IMR-90 (cell line): ENCODE measurements at regions of chr17 and their contacts with region 1.

Region 1: DNA sequence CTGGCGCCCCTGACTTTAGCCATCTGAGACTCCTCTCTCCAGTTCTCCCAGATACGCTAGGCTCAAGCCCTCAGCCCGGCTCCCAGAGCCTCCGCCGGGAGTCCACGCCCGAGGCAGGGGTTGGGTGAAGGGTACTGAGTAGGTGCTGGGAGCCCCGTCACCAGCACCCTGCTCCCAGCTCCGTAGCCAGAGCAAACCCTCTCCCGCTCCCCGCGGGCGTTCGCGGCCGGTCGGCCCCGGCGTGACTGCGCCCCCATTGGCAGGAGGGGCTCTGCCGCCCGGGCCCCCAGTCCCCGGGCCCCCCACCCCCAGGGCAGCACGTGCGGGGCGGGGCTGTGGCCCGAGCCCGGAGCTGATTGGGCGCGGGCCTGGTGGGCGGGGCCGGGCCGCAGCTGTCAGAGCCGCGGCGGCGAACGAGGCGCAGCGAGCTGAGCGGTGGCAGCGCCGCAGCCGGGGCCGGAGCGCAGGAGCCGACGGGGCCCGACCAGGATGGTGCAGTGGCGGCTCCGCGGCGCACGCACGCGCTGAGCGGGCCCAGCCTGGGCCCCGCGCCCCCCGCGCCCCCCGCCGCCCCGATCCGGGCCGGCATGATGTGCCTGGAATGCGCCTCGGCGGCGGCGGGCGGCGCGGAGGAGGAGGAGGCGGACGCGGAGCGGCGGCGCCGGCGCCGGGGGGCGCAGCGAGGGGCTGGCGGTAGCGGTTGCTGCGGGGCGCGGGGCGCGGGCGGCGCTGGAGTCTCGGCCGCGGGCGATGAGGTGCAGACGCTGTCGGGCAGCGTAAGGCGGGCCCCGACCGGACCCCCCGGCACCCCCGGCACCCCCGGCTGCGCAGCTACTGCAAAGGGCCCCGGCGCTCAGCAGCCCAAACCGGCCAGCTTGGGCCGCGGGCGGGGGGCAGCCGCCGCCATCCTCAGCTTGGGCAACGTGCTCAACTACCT is at the start of gene SPNS2:
- DNase-seq: peak; percentile 29
- ATAC-seq: peak; percentile 98
- H3K4me3 ChIP-seq: no peak within 1 kb of the TSS; the same call in 1 of the 2 replicates
- H3K27ac ChIP-seq: no peak within 1 kb of the TSS
- H3K4me1 ChIP-seq: no peaks in the 10 kb centered on the region
- H3K27me3 ChIP-seq: peaks cover 59% of the 10 kb centered on the region
- CTCF ChIP-seq: no peak
- POLR2A ChIP-seq: no peak
- RAD21 ChIP-seq: no peak
- total RNA-seq, gene SPNS2: under 0.01 TPM in 1 of 2 replicates, not detected in the other

Region 2: DNA sequence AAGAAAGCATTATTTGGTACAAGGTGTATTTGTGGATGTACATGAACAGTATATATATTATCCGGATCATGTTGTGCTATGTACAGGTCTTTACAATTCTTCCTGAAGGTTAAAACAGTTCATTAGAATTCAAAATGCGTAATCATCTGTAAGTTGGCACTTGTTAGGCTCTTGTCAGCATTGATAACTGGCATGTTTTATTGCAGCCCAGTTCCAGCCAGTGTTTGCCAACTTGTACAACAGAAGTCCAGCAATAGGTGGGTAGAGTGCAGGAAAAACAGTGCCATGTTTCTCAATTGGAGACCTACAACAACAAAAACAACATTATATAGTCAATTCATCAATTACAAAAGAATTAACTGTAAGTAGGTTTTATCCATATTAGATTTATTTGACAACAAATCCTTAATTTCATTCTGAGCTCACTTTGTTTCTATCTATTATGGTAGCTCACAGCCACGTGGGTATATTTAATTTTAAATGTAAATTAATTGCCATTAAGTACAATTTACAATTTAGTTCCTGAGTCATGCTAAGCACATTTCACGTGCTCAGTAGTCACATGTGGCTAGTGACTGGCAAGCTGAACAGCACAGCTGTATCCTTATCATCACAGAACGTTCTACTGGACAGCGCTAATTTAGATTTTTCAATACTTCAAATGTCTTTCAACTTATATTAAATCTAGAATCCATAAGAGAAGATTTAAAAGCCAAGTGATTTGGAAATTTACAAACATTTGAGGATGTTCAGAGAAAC is 226.3 kb before region 1 on chr17:
- CTCF ChIA-PET with region 1: no interaction called
- POLR2A ChIA-PET with region 1: interaction called, 18 read pairs
- dilution Hi-C with region 1: no loop called
- in situ Hi-C with region 1: no loop called
- intact Hi-C with region 1: no loop called
- DNase-seq: no peak
- ATAC-seq: no peak
- H3K4me3 ChIP-seq: no peak overlapping the region
- H3K27ac ChIP-seq: no peak overlapping the region
- H3K4me1 ChIP-seq: no peaks in the 10 kb centered on the region
- H3K27me3 ChIP-seq: no peaks in the 10 kb centered on the region
- CTCF ChIP-seq: no peak
- POLR2A ChIP-seq: no peak
- RAD21 ChIP-seq: no peak

Region 3: DNA sequence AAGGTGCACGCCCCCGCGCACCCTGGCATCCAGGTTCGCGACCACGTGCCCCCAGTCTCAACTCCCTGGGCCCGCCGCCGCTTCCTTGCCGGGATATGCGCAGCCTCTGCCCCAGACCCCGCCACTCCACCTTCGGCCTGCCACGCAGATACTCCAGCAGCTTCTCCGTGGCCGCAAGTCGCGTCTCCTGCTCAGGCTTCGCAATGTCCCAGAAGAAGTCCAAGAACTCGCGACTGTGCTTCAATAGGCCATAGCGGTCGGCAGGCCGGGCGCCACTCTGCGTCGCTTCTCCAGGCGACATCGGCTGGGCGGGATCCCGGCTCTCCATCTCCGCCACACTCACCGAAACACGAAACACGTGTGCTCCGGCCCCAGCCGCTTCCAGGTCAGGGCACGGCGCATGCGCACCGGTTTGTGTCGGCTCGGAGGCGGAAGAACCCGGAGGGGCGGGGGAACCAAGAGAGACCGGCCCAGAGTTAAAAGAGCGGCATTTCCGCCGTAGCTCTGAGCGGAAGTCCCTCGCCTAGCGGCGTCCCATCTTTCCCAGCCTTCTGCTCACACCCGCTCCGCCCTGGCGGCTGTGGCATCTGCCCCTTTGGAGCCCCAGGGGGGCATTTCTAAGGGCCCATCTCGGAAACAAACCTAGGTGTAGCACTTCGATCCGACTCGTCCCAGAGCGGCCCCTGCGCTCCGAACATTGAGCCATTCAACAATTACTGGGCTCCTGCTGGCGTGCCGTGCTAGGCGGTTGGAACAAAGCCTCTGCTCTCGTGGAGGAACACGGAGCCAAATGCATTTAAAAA is 56.5 kb after region 1 on chr17 and contains the start of gene MYBBP1A:
- CTCF ChIA-PET with region 1: no interaction called
- POLR2A ChIA-PET with region 1: no interaction called
- dilution Hi-C with region 1: no loop called
- in situ Hi-C with region 1: loop called (anchors 10 kb)
- intact Hi-C with region 1: no loop called
- DNase-seq: peak; percentile 92
- ATAC-seq: peak; percentile 97
- H3K4me3 ChIP-seq: peak within 1 kb of the TSS; percentile 88
- H3K27ac ChIP-seq: peak within 1 kb of the TSS; percentile 87
- H3K4me1 ChIP-seq: peaks cover 8% of the 10 kb centered on the region
- H3K27me3 ChIP-seq: no peaks in the 10 kb centered on the region
- CTCF ChIP-seq: peak; percentile 23; the same call in 1 of the 2 replicates
- POLR2A ChIP-seq: peak; percentile 69
- RAD21 ChIP-seq: no peak
- total RNA-seq, gene MYBBP1A: 22.6 and 24.7 TPM in 2 replicates